Activated CD4-positive, alpha-beta T cell treated with anti-CD3 and anti-CD28 coated beads for 36 hours (primary cell): ENCODE measurements at regions of chr10 and their contacts with region 1.

Region 1: DNA sequence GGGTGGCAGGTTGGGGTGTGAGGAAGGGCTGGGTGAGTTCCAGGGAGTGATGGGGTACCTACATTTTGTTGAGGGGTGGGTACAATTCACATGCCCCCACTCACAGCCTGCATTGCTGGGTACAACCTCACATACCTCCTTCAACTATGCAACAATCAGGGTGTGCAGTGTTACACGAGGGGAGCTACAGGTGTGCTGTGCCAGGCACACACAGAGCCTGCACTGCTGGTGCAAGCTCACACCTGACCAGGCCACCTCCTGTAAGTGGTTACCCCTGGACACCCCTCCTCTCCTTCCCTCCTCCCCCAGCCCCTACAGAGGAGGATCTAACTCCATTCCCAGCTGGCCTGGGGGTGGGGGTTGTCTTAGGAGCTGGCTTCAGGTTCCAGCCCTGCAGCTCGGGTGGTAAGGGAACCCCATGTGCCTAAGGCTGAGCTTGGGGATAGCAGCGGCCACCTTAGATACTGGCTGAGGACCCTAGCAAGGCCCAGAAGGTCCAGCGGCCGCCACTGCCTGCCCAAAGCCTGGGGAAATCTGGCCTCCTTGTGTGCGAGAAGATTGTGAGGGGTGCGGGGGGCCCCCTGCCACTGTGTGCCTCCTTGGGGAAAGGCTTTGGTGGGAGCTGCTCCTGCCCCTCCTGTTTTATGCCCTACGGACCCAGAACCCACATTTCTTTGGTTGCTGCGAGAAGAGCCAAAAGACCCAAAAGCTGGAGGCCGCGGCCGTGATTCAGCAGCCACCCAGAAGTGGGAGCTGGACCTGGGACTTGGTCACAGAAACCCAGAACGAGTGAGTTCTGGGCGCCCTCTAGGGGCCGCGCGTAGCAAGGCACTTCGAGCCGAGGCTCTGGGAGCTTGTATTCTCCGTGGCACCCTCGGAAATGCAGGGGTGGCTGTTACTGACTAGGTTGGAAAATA is 10.8 kb downstream of the TLX1 start:
- DNase-seq: peak; percentile 91
- ATAC-seq: peak; percentile 90
- H3K4me3 Mint-ChIP-seq: no peak overlapping the region
- H3K27ac Mint-ChIP-seq: no peak overlapping the region
- H3K4me1 Mint-ChIP-seq: peaks cover 19% of the 10 kb centered on the region
- H3K27me3 Mint-ChIP-seq: peaks cover 78% of the 10 kb centered on the region

Region 2: DNA sequence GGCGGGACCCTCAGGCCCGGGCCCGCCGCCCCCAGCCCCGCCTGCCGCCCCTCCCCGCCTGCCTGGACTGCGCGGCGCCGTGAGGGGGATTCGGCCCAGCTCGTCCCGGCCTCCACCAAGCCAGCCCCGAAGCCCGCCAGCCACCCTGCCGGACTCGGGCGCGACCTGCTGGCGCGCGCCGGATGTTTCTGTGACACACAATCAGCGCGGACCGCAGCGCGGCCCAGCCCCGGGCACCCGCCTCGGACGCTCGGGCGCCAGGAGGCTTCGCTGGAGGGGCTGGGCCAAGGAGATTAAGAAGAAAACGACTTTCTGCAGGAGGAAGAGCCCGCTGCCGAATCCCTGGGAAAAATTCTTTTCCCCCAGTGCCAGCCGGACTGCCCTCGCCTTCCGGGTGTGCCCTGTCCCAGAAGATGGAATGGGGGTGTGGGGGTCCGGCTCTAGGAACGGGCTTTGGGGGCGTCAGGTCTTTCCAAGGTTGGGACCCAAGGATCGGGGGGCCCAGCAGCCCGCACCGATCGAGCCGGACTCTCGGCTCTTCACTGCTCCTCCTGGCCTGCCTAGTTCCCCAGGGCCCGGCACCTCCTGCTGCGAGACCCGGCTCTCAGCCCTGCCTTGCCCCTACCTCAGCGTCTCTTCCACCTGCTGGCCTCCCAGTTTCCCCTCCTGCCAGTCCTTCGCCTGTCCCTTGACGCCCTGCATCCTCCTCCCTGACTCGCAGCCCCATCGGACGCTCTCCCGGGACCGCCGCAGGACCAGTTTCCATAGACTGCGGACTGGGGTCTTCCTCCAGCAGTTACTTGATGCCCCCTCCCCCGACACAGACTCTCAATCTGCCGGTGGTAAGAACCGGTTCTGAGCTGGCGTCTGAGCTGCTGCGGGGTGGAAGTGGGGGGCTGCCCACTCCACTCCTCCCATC is 313.8 kb before region 1 on chr10:
- CTCF ChIA-PET with region 1: no interaction called
- POLR2A ChIA-PET with region 1: no interaction called
- intact Hi-C with region 1: loop called in 1 of 2 experiments (anchors 5 kb)
- DNase-seq: peak; percentile 62
- ATAC-seq: peak; percentile 48
- H3K4me3 Mint-ChIP-seq: peak overlapping the region; percentile 70
- H3K27ac Mint-ChIP-seq: no peak overlapping the region
- H3K4me1 Mint-ChIP-seq: peaks cover 24% of the 10 kb centered on the region
- H3K27me3 Mint-ChIP-seq: peaks cover 66% of the 10 kb centered on the region

Region 3: DNA sequence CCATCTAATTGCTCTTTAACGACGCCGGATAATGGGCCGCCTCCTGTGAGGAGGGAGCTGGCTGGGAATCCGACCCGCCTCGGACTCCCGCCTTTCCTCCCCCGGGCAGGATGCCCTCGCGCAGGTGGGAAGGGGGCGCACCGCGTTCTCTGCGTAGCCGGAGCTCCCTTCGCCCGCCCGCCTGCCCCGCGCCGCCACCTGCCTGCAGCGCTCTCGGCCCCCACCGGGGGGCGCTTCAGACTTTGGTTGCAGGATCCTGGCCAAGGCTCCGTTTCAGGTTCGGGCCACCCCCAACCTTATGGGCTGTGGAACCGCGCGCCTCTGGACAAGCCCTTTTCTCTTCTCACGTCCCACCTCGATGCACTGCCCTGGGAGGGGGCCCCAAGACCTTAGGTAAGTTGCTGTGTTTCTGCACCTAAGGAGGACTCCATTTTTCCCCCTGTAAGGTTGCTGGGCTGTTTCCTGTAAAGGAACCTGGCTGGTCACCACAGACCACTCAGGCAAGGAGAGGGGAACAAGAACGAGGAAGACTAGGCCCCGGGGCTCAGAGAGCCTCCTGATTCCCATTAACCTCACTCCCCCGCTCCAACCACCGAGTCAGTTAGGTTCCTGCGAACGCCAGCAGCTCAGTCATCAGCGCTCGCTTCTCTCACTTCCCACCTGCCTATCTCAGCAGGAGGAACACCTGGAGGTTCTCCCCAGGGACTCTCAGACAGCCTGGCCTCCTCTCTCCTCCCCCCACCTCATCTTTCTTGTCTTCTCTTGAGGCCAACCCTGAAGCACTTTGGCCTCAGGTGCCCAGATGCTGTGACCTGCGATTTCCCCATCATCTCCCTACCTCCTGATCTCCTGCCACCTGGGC is 91.4 kb before region 1 on chr10:
- CTCF ChIA-PET with region 1: interaction called, 21 read pairs
- POLR2A ChIA-PET with region 1: no interaction called
- intact Hi-C with region 1: no loop called
- DNase-seq: peak; percentile 88
- ATAC-seq: peak; percentile 92
- H3K4me3 Mint-ChIP-seq: no peak overlapping the region
- H3K27ac Mint-ChIP-seq: no peak overlapping the region
- H3K4me1 Mint-ChIP-seq: peaks cover 10% of the 10 kb centered on the region
- H3K27me3 Mint-ChIP-seq: peaks cover 43% of the 10 kb centered on the region

Region 4: GRCh38 chr10:101095542-101096213 is 46.2 kb before region 1 on chr10:
- CTCF ChIA-PET with region 1: interaction called, 298 read pairs
- POLR2A ChIA-PET with region 1: interaction called, 4 read pairs
- intact Hi-C with region 1: loop called (anchors 1 kb)
- DNase-seq: peak; percentile 86
- ATAC-seq: peak; percentile 100
- H3K4me3 Mint-ChIP-seq: no peak overlapping the region
- H3K27ac Mint-ChIP-seq: no peak overlapping the region
- H3K4me1 Mint-ChIP-seq: no peaks in the 10 kb centered on the region
- H3K27me3 Mint-ChIP-seq: peaks cover 27% of the 10 kb centered on the region

Region 5: DNA sequence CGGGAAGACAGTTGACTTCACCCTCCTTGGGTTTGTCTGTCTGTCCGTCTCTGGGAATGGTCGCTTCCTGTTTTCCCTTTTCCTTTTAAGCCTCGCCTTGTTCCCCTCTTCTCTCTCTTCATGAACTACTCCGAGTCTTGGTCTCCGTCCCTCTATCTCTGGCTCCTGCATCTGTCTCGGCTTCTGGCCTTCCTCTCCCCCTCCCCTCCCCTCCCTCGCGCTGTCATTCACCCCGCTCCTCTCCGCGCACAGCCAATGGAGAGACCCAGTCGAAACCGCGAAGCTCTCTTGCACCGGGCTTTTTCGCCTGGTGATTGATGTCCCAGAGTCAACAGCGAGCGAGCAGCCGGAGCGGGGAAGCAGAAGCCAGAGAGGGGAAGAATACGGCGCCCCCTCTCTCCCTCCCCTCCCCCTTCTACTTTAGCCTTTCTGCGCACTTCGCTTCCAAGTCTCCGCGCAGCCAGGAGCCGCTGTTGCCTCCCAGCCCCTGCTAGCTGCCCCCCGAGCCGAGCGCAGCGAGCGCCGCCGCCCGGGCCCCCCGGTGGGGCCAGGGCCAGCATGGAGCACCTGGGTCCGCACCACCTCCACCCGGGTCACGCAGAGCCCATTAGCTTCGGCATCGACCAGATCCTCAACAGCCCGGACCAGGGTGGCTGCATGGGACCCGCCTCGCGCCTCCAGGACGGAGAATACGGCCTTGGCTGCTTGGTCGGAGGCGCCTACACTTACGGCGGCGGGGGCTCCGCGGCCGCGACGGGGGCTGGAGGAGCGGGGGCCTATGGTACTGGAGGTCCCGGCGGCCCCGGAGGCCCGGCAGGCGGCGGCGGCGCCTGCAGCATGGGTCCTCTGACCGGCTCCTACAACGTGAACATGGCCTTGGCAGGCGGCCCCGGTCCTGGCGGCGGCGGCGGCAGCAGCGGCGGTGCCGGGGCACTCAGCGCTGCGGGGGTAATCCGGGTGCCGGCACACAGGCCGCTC is 10.6 kb before region 1 on chr10 and contains the start of gene TLX1:
- CTCF ChIA-PET with region 1: interaction called, 58 read pairs
- POLR2A ChIA-PET with region 1: no interaction called
- intact Hi-C with region 1: no loop called
- DNase-seq: peak; percentile 41
- ATAC-seq: no peak
- H3K4me3 Mint-ChIP-seq: peak within 1 kb of the TSS; percentile 21
- H3K27ac Mint-ChIP-seq: no peak within 1 kb of the TSS
- H3K4me1 Mint-ChIP-seq: peaks cover 24% of the 10 kb centered on the region
- H3K27me3 Mint-ChIP-seq: peaks cover 76% of the 10 kb centered on the region
- total RNA-seq, gene TLX1: not detected

Region 6: GRCh38 chr10:101161494-101162299 is 19.8 kb after region 1 on chr10:
- CTCF ChIA-PET with region 1: interaction called, 22 read pairs
- POLR2A ChIA-PET with region 1: no interaction called
- intact Hi-C with region 1: no loop called
- DNase-seq: peak; percentile 85
- ATAC-seq: peak; percentile 83
- H3K4me3 Mint-ChIP-seq: no peak overlapping the region
- H3K27ac Mint-ChIP-seq: no peak overlapping the region
- H3K4me1 Mint-ChIP-seq: peaks cover 10% of the 10 kb centered on the region
- H3K27me3 Mint-ChIP-seq: peaks cover 54% of the 10 kb centered on the region